Activated CD4-positive, alpha-beta T cell treated with anti-CD3 and anti-CD28 coated beads, Interleukin-2, amount 10 ng/mL, durations not matched to agents 24 days and 14 days (primary cell): ENCODE measurements at regions of chr3 and their contacts with region 1.

Region 1: GRCh38 chr3:150408221-150409102 is at the start of gene TSC22D2:
- DNase-seq: peak; percentile 99
- H3K4me3 Mint-ChIP-seq: peak within 1 kb of the TSS; percentile 81
- H3K27ac Mint-ChIP-seq: peak within 1 kb of the TSS; percentile 92
- H3K4me1 Mint-ChIP-seq: peaks cover 23% of the 10 kb centered on the region
- H3K27me3 Mint-ChIP-seq: peaks cover 8% of the 10 kb centered on the region
- total RNA-seq, gene TSC22D2: 16.4 and 18.7 TPM in 2 replicates

Region 2: DNA sequence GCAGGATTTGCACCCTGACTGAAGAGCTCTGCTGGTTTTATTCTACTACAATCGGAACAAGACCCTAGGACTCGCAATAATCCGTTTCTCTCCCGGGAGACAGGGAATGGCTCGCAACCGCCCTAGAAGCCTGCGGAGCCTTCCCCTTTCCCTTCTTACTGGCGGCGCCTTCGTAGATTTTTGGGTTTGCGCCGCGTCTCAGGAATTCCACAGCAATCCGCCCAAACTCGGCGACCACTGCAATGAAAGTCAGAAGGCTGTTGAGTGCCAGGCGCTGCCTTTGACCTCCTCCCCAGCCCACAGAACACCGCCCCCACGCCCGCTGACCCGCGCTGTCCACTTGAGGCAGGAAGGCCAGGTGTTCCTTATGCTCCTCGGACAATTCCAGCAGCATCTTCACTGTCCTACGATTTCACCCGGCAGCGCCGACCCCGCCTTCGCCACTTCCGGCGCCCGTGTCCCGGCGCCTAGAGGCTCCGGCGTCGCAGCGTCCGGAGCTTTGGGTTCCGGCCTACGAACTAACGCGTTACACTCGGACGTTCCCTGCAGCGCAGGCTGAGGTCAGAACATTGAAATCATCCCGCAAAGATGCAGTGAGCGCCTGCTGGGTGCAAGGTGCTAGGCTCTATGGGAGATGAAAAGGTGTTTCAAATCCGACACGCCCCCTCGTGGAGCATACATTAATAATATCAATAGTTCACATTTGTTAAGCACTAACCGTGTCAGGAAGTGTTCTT is 656.2 kb before region 1 on chr3 and contains the start of gene COMMD2:
- intact Hi-C with region 1: loop called (anchors 2 kb)
- DNase-seq: peak; percentile 92
- H3K4me3 Mint-ChIP-seq: peak within 1 kb of the TSS; percentile 96
- H3K27ac Mint-ChIP-seq: peak within 1 kb of the TSS; percentile 86
- H3K4me1 Mint-ChIP-seq: peaks cover 13% of the 10 kb centered on the region
- H3K27me3 Mint-ChIP-seq: peaks cover 3% of the 10 kb centered on the region
- total RNA-seq, gene COMMD2: 42.1 and 44.2 TPM in 2 replicates

Region 3: DNA sequence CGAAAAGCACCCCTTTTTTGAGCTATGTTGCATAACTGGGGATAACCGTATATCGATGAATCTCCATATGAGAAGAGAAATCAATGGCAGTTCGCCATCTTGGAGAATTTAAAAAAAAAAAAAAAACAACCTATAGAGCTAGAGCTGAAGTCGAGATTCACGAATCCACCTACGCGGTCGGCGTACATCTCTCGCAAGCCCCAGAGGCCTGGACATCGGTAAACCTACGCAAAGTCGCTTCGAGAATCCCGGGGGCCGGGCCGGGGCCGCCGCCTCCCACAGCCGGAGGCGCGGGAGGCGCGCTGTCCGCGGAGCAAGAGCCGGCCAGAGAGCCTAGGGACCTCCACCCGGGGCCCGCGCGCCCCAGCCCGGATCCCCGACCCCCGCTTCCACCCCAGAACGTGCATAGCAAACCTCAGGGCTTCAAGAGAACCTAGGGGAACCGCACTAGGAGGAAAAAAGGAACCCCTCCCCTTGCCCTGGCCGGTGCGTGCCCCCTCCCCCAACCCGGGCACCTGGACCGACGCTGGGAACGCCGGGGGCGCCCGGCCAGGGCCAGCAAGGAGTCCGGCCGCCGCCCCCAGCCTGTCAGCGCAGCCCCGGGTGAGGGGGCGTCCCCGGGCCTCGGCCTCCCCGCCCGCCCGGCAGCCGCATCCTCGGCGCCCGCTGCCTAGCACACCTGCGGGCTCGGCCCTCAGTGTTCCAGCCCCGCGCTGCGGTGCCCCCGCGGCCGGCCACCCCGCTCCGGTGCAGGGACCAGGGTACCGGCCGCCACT is 438.3 kb before region 1 on chr3:
- intact Hi-C with region 1: loop called (anchors 10 kb)
- DNase-seq: peak; percentile 91
- H3K4me3 Mint-ChIP-seq: peak overlapping the region; percentile 88
- H3K27ac Mint-ChIP-seq: peak overlapping the region; percentile 72
- H3K4me1 Mint-ChIP-seq: peaks cover 15% of the 10 kb centered on the region
- H3K27me3 Mint-ChIP-seq: peaks cover 52% of the 10 kb centered on the region

Region 4: DNA sequence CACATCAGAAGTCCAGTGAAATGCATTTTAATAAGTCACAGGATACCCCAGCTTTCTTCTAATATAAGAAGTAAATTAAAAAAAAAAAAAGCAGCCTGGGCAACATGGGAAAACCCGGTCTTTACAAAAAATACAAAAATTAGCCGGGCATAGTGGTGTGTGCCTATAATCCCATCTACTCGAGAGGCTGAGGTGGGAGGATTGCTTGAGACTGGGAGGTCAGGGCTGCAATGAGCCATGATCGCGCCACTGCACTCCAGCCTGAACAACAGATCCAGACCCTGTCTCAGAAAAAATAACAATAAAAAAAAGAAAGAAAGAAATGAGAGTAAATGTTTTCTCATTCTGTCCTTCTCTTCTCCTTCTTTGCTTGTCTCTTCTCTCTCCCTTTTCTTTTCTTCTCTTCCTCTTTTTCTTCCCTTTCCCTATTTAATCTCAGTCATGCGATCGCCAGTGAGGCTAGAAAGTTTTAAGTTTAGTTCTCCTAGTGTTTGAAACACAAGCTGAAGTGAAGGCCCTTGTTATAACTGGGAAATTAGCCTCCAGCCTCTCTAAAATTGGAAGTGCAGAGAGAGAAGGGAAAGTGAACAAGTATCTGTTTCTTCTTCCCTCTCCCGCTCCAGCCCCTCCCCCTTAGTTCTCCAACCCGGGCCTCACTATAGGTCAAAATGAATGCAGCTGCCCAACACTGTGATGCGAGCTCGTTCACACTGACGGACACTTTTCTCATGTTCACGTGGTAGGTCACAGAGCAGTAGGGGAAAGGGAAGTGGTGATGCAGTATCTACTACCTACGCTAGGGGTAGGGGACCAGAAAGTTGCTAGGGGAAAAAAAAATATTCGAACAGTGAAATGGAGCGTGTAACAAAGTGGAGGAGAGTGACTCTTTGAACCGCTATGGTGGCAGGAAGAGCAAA is 23.9 kb before region 1 on chr3:
- intact Hi-C with region 1: loop called (anchors 1 kb)
- DNase-seq: peak; percentile 84
- H3K4me3 Mint-ChIP-seq: peak overlapping the region; percentile 68
- H3K27ac Mint-ChIP-seq: peak overlapping the region; percentile 77
- H3K4me1 Mint-ChIP-seq: peaks cover 25% of the 10 kb centered on the region
- H3K27me3 Mint-ChIP-seq: no peaks in the 10 kb centered on the region

Region 5: GRCh38 chr3:150469031-150469942 is 60.8 kb after region 1 on chr3:
- intact Hi-C with region 1: no loop called
- DNase-seq: no peak
- H3K4me3 Mint-ChIP-seq: no peak overlapping the region
- H3K27ac Mint-ChIP-seq: no peak overlapping the region
- H3K4me1 Mint-ChIP-seq: no peaks in the 10 kb centered on the region
- H3K27me3 Mint-ChIP-seq: no peaks in the 10 kb centered on the region

Region 6: GRCh38 chr3:150546226-150547044 is 138.0 kb after region 1 on chr3 and contains the starts of genes EIF2A and SERP1:
- intact Hi-C with region 1: loop called (anchors 1 kb)
- DNase-seq: peak; percentile 100
- H3K4me3 Mint-ChIP-seq: peak within 1 kb of the TSS; percentile 90
- H3K27ac Mint-ChIP-seq: peak within 1 kb of the TSS; percentile 95
- H3K4me1 Mint-ChIP-seq: peaks cover 51% of the 10 kb centered on the region
- H3K27me3 Mint-ChIP-seq: no peaks in the 10 kb centered on the region
- total RNA-seq, gene EIF2A: 125 and 133 TPM in 2 replicates
- total RNA-seq, gene SERP1: 88.8 and 103 TPM in 2 replicates

Region 7: GRCh38 chr3:150703299-150704134 is 295.1 kb after region 1 on chr3 and contains the start of gene ERICH6:
- intact Hi-C with region 1: loop called (anchors 5 kb)
- DNase-seq: peak; percentile 95
- H3K4me3 Mint-ChIP-seq: peak within 1 kb of the TSS; percentile 92
- H3K27ac Mint-ChIP-seq: peak within 1 kb of the TSS; percentile 99
- H3K4me1 Mint-ChIP-seq: peaks cover 28% of the 10 kb centered on the region
- H3K27me3 Mint-ChIP-seq: peaks cover 10% of the 10 kb centered on the region
- total RNA-seq, gene ERICH6: not detected in 2 replicates